Right ventricle myocardium superior (tissue), 1 donor: ENCODE measurements at regions of chr12 and their contacts with region 1.

Region 1: GRCh38 chr12:50504798-50505385 is at the start of gene DIP2B:
- DNase-seq: peak; percentile 97
- ATAC-seq: peak; percentile 96
- total RNA-seq, gene DIP2B: 10.1 TPM

Region 2: GRCh38 chr12:50633955-50634354 is 129.1 kb after region 1 on chr12:
- intact Hi-C with region 1: loop called (anchors 2 kb)
- DNase-seq: no peak
- ATAC-seq: peak; percentile 15

Region 3: DNA sequence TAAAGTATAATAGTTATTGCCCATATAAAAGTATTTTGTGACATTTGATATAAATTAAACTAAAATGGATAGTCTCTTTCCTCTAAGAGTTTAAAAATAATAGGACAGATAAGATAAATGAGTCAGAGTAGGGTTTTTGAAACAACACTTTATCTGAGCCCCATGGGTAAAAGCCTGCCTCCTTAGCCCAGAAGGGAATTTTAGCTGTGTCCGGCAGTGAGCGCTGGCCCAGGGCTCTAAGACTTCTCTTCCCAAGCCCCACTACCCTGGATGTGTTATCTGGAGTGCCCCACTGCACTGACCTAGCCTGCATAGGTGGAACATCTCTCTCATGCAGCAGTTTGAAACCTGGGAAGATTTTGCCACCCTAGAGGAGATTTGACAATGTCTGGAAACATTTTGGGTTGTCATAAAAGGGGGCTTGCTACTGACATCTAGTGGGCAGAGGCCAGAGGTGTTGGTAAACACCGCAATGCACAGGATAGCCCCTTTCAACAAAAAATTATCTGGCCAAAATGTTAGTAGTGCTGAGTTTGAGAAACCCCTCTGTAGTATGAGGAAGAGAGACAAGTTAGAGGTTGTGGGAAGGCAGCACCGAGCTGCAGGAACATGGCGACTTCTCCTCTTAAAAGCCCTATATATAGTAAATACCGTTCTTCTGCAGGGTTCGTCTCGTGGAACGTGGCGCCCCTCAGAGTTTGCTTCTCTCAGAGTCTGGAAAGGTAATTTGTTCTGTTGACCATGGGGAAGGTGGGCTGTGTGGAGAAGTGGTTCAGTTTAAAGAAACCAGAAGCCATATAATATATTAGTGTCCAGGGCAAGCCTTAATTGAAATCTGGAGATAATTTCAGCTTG is 229.7 kb after region 1 on chr12:
- intact Hi-C with region 1: loop called (anchors 10 kb)
- DNase-seq: no peak
- ATAC-seq: peak; percentile 72